MCF 10A (cell line): ENCODE measurements at regions of chr10 and their contacts with region 1.

Region 1: GRCh38 chr10:122461367-122461728 is at the start of gene HTRA1:
- DNase-seq: peak; percentile 78
- H3K4me3 Mint-ChIP-seq: peak within 1 kb of the TSS; percentile 99
- H3K27ac Mint-ChIP-seq: no peak within 1 kb of the TSS
- H3K4me1 Mint-ChIP-seq: peaks cover 34% of the 10 kb centered on the region
- H3K27me3 Mint-ChIP-seq: no peaks in the 10 kb centered on the region
- CTCF ChIP-seq: no peak
- total RNA-seq, gene HTRA1: 157 and 175 TPM in 2 replicates

Region 2: GRCh38 chr10:122191936-122192541 is 269.3 kb before region 1 on chr10:
- CTCF ChIA-PET with region 1: no interaction called
- POLR2A ChIA-PET with region 1: no interaction called
- intact Hi-C with region 1: no loop called
- DNase-seq: no peak
- H3K4me3 Mint-ChIP-seq: no peak overlapping the region
- H3K27ac Mint-ChIP-seq: no peak overlapping the region
- H3K4me1 Mint-ChIP-seq: no peaks in the 10 kb centered on the region
- H3K27me3 Mint-ChIP-seq: no peaks in the 10 kb centered on the region
- CTCF ChIP-seq: no peak

Region 3: DNA sequence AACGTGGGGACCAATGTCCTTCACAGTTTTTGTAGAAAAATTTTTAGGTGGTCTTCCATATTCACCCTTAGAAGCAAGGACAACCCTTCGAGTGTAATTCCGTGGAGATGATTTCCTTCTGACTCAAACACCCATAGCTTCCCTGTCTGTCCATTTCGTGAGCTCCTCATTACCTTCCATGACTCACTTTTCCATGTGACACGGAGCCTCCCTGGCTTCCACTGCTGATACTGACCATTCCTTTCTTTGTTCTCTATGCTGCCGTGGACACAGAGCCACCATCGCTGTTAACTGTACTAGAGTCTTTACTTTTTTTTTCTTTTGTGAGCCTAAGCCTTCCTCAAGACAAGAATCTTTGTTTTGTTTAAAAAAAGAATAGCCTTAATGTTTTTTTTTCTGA is 19.4 kb before region 1 on chr10:
- CTCF ChIA-PET with region 1: interaction called, 3 read pairs
- POLR2A ChIA-PET with region 1: interaction called, 10 read pairs
- intact Hi-C with region 1: no loop called
- DNase-seq: peak; percentile 74
- H3K4me3 Mint-ChIP-seq: peak overlapping the region; percentile 43
- H3K27ac Mint-ChIP-seq: peak overlapping the region; percentile 85
- H3K4me1 Mint-ChIP-seq: peaks cover 14% of the 10 kb centered on the region
- H3K27me3 Mint-ChIP-seq: no peaks in the 10 kb centered on the region
- CTCF ChIP-seq: no peak

Region 4: GRCh38 chr10:122510326-122510725 is 49.0 kb after region 1 on chr10:
- CTCF ChIA-PET with region 1: interaction called, 4 read pairs
- POLR2A ChIA-PET with region 1: interaction called, 4 read pairs
- intact Hi-C with region 1: loop called (anchors 1 kb)
- DNase-seq: peak; percentile 88
- H3K4me3 Mint-ChIP-seq: peak overlapping the region; percentile 24
- H3K27ac Mint-ChIP-seq: peak overlapping the region; percentile 87
- H3K4me1 Mint-ChIP-seq: peaks cover 19% of the 10 kb centered on the region
- H3K27me3 Mint-ChIP-seq: no peaks in the 10 kb centered on the region
- CTCF ChIP-seq: no peak